Tibial artery (tissue), 4 donors: ENCODE measurements at regions of chr6 and their contacts with region 1.

Region 1: DNA sequence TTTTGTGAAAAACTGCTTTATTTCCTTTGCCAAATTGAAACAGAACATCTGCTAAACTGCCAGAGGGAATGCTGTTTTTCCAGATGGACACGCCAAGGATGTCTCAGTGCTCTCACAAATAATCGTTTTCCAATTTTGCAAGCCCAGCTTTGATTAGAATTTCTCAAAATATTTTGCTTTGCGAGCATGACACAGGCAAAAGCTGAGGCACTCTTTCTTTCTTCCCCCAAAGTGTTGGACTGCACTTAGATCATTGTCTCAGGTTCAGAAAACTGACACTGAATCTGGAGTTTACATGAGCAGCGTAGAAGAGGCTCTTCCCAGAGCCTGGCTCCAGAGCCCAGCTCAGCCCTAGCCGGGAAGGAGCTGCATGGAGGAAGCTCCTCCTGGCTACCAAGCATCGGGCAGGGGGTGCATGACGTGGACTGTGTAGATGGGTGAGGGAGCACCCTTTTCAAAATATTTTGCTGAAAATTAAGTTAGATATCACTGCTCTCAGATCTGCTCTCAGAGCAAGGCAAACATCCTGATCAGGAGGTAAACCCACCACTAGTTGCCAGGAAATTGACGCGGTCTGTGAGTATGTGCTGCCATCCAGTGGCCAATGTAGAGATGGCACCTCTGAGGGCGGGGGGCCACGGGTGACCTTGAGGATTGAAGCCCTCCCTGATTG is 107.5 kb downstream of the SLC22A3 start:
- DNase-seq: peak; percentile 40 to 83
- H3K4me3 ChIP-seq: peak overlapping the region; percentile 15 to 23
- H3K27ac ChIP-seq: peak overlapping the region; percentile 30 to 60
- H3K4me1 ChIP-seq: peaks cover 0 to 10% (median 6%) of the 10 kb centered on the region in 4 donors
- H3K27me3 ChIP-seq: no peaks in the 10 kb centered on the region
- CTCF ChIP-seq: peak; percentile 94 to 98

Region 2: GRCh38 chr6:160088069-160088783 is 367.5 kb before region 1 on chr6:
- intact Hi-C with region 1: loop called (anchors 5 kb)
- DNase-seq: peak; percentile 63 to 82
- H3K4me3 ChIP-seq: no peak overlapping the region
- H3K27ac ChIP-seq: no peak overlapping the region
- H3K4me1 ChIP-seq: peaks cover 0 to 6% (median 0%) of the 10 kb centered on the region in 4 donors
- H3K27me3 ChIP-seq: no peaks in the 10 kb centered on the region
- CTCF ChIP-seq: peak; percentile 76 to 85